ENCODE measurements at regions of chr4 and their contacts with region 1.

Region 1: GRCh38 chr4:98203332-98204235 is 57.6 kb upstream of the RAP1GDS1 start:
- DNase-seq: no peak
- ATAC-seq: peak; percentile 82
- H3K4me3 Mint-ChIP-seq: peak overlapping the region; percentile 62
- H3K27ac Mint-ChIP-seq: peak overlapping the region; percentile 86
- H3K4me1 Mint-ChIP-seq: peaks cover 37% of the 10 kb centered on the region
- H3K27me3 Mint-ChIP-seq: no peaks in the 10 kb centered on the region
- CTCF ChIP-seq: no peak

Region 2: DNA sequence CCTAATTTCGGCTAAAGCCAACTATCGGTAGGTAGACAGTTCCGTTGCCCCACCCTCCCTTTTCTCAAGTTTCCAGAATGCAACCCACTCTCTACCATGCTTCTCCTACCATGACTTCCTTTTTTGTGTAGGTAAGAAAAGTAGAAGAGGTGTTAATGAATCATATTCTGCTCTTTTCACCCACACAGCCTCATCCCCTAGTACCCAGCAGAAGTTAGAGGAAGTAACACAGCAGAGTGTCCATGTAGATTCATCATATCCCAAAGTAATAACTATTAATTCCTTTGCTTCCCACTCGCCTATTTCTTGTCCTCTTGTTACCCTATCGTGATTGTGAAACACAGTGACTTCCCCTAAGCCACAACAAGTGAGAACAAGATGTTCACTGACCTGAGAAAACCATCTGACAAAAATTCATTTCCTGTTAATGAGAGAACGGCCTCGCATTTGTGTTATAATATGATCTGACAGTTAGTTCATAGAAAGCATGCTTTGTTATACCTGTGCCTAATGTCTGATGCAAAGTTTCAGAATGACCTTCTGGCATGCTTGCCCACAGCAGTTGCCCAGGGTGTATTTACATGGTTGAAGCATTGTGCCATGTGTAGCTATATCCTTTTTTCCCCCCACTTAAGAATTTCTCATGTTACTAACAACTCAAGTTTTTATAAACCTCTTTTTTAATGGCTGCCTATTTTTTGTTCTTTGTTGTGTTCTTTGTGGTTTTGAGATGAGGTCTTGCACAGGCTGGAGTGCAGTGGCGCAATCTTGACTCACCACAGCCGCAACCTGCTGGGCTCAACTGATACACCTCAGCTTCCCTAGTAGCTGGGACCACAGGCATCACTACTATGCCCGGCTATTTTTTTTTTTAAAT is 243.2 kb after region 1 on chr4:
- CTCF ChIA-PET with region 1: no interaction called
- POLR2A ChIA-PET with region 1: interaction called, 3 read pairs
- intact Hi-C with region 1: loop called (anchors 5 kb)
- DNase-seq: no peak
- ATAC-seq: peak; percentile 67
- H3K4me3 Mint-ChIP-seq: peak overlapping the region; percentile 72
- H3K27ac Mint-ChIP-seq: peak overlapping the region; percentile 87
- H3K4me1 Mint-ChIP-seq: peaks cover 41% of the 10 kb centered on the region
- H3K27me3 Mint-ChIP-seq: no peaks in the 10 kb centered on the region
- CTCF ChIP-seq: no peak

Region 3: GRCh38 chr4:99339172-99339571 is 1135.6 kb after region 1 on chr4:
- CTCF ChIA-PET with region 1: no interaction called
- POLR2A ChIA-PET with region 1: no interaction called
- intact Hi-C with region 1: no loop called
- DNase-seq: no peak
- ATAC-seq: no peak
- H3K4me3 Mint-ChIP-seq: no peak overlapping the region
- H3K27ac Mint-ChIP-seq: no peak overlapping the region
- H3K4me1 Mint-ChIP-seq: no peaks in the 10 kb centered on the region
- H3K27me3 Mint-ChIP-seq: peaks cover 3% of the 10 kb centered on the region
- CTCF ChIP-seq: no peak